K562 (cell line): ENCODE measurements at regions of chr3 and their contacts with region 1.

Region 1: GRCh38 chr3:39406368-39407258 is at the start of gene RPSA:
- DNase-seq: peak; percentile 90 to 99 (median 94)
- ATAC-seq: peak; percentile 92
- H3K4me3 ChIP-seq: peak within 1 kb of the TSS; percentile 61
- H3K27ac ChIP-seq: peak within 1 kb of the TSS; percentile 91
- H3K4me1 ChIP-seq: peaks cover 18 to 29% of the 10 kb centered on the region in 2 experiments; a peak in 4 of 5 replicates
- H3K27me3 ChIP-seq: no peaks in the 10 kb centered on the region
- CTCF ChIP-seq: peak; percentile 48 to 88 (median 84)
- EP300 ChIP-seq: peak; percentile 27
- POLR2A ChIP-seq: peak; percentile 100
- RAD21 ChIP-seq: peak; percentile 51 to 71
- polyA plus RNA-seq, gene RPSA: 2,672 to 2,730 TPM

Region 2: GRCh38 chr3:39383045-39383880 is 23.4 kb before region 1 on chr3 and contains the start of gene SLC25A38:
- CTCF ChIA-PET with region 1: interaction called, 5 read pairs
- POLR2A ChIA-PET with region 1: interaction called, 20 read pairs
- in situ Hi-C with region 1: no loop called
- intact Hi-C with region 1: loop called (anchors 1 kb)
- DNase-seq: peak; percentile 82 to 94 (median 88)
- ATAC-seq: peak; percentile 88
- H3K4me3 ChIP-seq: peak within 1 kb of the TSS; percentile 69
- H3K27ac ChIP-seq: peak within 1 kb of the TSS; percentile 85
- H3K4me1 ChIP-seq: peaks cover 39 to 50% of the 10 kb centered on the region in 2 experiments
- H3K27me3 ChIP-seq: peaks cover 3 to 4% of the 10 kb centered on the region in 2 experiments; a peak in 3 of 5 replicates
- CTCF ChIP-seq: peak; percentile 61 to 64 (median 61)
- EP300 ChIP-seq: peak; percentile 35; the same call in 1 of the 2 replicates
- POLR2A ChIP-seq: peak; percentile 78
- RAD21 ChIP-seq: peak; percentile 43 to 45; a peak in 2 of 4 replicates
- polyA plus RNA-seq, gene SLC25A38: 13.5 to 16.5 TPM

Region 3: GRCh38 chr3:39497753-39498152 is 91.1 kb after region 1 on chr3:
- CTCF ChIA-PET with region 1: interaction called, 4 read pairs
- POLR2A ChIA-PET with region 1: interaction called, 3 read pairs
- in situ Hi-C with region 1: no loop called
- intact Hi-C with region 1: loop called (anchors 1 kb)
- DNase-seq: no peak
- ATAC-seq: no peak
- H3K4me3 ChIP-seq: no peak overlapping the region
- H3K27ac ChIP-seq: no peak overlapping the region
- H3K4me1 ChIP-seq: peaks cover 0 to 8% of the 10 kb centered on the region in 2 experiments; a peak in 2 of 5 replicates
- H3K27me3 ChIP-seq: peaks cover 18 to 22% of the 10 kb centered on the region in 2 experiments
- CTCF ChIP-seq: no peak
- EP300 ChIP-seq: no peak
- POLR2A ChIP-seq: no peak
- RAD21 ChIP-seq: no peak

Region 4: DNA sequence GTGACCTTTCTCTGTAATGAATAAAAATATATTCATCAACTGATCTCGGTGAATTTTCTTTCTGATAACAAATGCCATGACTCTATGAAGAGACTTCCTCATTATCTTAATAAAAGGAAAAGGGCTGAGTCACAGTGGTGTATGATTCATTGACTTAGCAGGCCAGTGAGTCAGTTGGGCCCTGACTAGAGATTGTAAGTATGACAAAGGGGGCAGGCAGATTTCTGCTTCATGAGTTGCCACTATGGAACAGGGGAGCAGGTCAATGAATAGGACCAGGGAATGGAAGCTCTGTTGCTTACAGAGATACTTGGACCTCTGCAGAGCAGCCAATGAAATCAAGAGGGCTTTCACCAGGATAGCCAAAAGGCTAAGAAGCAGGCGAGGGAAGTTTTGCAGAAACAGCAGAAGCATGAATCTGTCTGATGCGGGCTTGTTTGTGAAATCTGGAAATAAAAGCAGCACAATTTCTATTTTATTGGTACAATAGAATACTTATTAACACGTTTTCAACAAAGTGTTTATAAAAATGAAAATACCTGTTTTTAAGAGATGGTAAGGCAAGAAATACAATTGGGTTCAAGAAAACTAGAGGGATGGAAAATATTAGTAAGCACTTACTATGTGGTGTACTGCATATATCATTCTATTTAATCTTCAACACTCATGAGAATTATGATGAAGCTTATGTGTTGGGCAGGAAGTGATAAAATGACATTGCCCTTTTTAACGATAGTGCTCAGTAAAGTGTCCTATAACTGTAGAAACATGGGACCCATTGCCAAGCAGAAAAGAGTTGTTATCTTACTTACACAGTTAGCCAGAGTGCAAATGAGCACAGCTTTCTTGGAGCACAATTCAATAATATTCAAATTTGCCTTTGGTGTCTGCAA is 233.0 kb after region 1 on chr3:
- CTCF ChIA-PET with region 1: no interaction called
- POLR2A ChIA-PET with region 1: no interaction called
- in situ Hi-C with region 1: no loop called
- intact Hi-C with region 1: loop called (anchors 5 kb)
- DNase-seq: peak; percentile 66 to 94 (median 80)
- ATAC-seq: peak; percentile 98
- H3K4me3 ChIP-seq: no peak overlapping the region
- H3K27ac ChIP-seq: peak overlapping the region; percentile 86
- H3K4me1 ChIP-seq: peaks cover 4 to 22% of the 10 kb centered on the region in 2 experiments; a peak in 4 of 5 replicates
- H3K27me3 ChIP-seq: no peaks in the 10 kb centered on the region
- CTCF ChIP-seq: no peak
- EP300 ChIP-seq: peak; percentile 90
- POLR2A ChIP-seq: no peak
- RAD21 ChIP-seq: no peak

Region 5: DNA sequence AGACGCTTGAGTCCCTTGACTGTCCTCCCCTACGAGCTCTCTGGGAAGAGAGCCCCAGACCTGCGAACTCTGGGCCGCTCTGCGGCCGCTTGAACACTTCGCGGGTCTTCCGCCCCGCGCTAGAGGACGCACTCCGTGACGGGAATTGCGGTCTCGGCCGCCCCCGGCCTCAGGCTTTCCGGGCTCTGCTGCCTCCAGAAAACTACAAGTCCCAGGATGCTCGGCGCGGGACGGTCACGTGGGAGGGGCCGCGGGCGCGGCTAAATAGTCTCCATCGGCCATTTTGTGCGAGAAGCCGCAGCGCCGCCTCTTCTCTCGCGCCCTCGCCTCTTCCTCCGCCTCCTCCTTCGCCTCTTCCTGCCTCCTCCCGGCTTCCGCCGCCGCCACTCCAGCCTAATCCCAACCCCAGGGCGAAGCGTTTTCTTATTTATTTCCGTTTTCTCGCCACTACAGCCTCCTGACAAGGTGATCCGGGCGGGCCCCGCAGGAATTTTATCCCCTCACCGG is 902.9 kb after region 1 on chr3 and contains the start of gene EIF1B:
- CTCF ChIA-PET with region 1: no interaction called
- POLR2A ChIA-PET with region 1: no interaction called
- in situ Hi-C with region 1: loop called (anchors 10 kb)
- intact Hi-C with region 1: loop called (anchors 10 kb)
- DNase-seq: peak; percentile 97 to 100 (median 98)
- ATAC-seq: peak; percentile 88
- H3K4me3 ChIP-seq: peak within 1 kb of the TSS; percentile 91
- H3K27ac ChIP-seq: peak within 1 kb of the TSS; percentile 96
- H3K4me1 ChIP-seq: peaks cover 8 to 38% of the 10 kb centered on the region in 2 experiments
- H3K27me3 ChIP-seq: no peaks in the 10 kb centered on the region
- CTCF ChIP-seq: peak; percentile 95 to 98 (median 96)
- EP300 ChIP-seq: peak; percentile 64
- POLR2A ChIP-seq: peak; percentile 95
- RAD21 ChIP-seq: peak; percentile 64 to 74
- polyA plus RNA-seq, gene EIF1B: 178 to 184 TPM